Left lung (tissue), 14 donors: ENCODE measurements at regions of chr1 and their contacts with region 1.

Region 1: GRCh38 chr1:175033953-175034352 is 10.7 kb upstream of the MRPS14 start:
- DNase-seq: no peak
- ATAC-seq: no peak
- H3K4me3 ChIP-seq: no peak overlapping the region
- H3K27ac ChIP-seq: no peak overlapping the region
- H3K4me1 ChIP-seq: no peaks in the 10 kb centered on the region
- H3K27me3 ChIP-seq: no peaks in the 10 kb centered on the region
- CTCF ChIP-seq: no peak

Region 2: GRCh38 chr1:175129997-175130648 is 96.2 kb after region 1 on chr1:
- intact Hi-C with region 1: loop called in 1 of 2 experiments (anchors 5 kb)
- DNase-seq: peak in 1 of 4 donors; percentile 29
- ATAC-seq: peak; percentile 16
- H3K4me3 ChIP-seq: no peak overlapping the region
- H3K27ac ChIP-seq: peak overlapping the region; percentile 50 to 60
- H3K4me1 ChIP-seq: peaks cover 8 to 36% of the 10 kb centered on the region in 2 donors
- H3K27me3 ChIP-seq: no peaks in the 10 kb centered on the region
- CTCF ChIP-seq: no peak

Region 3: GRCh38 chr1:175146529-175147213 is 112.7 kb after region 1 on chr1:
- intact Hi-C with region 1: loop called in 1 of 2 experiments (anchors 5 kb)
- DNase-seq: peak in 3 of 4 donors; percentile 65 to 92 (median 72)
- ATAC-seq: peak; percentile 96
- H3K4me3 ChIP-seq: no peak overlapping the region
- H3K27ac ChIP-seq: no peak overlapping the region
- H3K4me1 ChIP-seq: no peaks in the 10 kb centered on the region
- H3K27me3 ChIP-seq: peaks cover 0 to 10% of the 10 kb centered on the region in 2 donors
- CTCF ChIP-seq: peak; percentile 65 to 78